Heart right ventricle (tissue), 16 donors: ENCODE measurements at regions of chr21 and their contacts with region 1.

Region 1: GRCh38 chr21:43001295-43001694 is 26.9 kb downstream of the PKNOX1 start:
- DNase-seq: no peak
- ATAC-seq: peak in 1 of 8 donors; percentile 49
- H3K4me3 ChIP-seq: no peak overlapping the region
- H3K27ac ChIP-seq: no peak overlapping the region
- H3K4me1 ChIP-seq: peaks cover 0 to 15% (median 5%) of the 10 kb centered on the region in 9 donors
- H3K27me3 ChIP-seq: no peaks in the 10 kb centered on the region
- CTCF ChIP-seq: no peak

Region 2: GRCh38 chr21:42486531-42486930 is 514.8 kb before region 1 on chr21:
- intact Hi-C with region 1: no loop called
- DNase-seq: no peak
- ATAC-seq: no peak
- H3K4me3 ChIP-seq: no peak overlapping the region
- H3K27ac ChIP-seq: no peak overlapping the region
- H3K4me1 ChIP-seq: no peaks in the 10 kb centered on the region
- H3K27me3 ChIP-seq: peaks cover 0 to 19% (median 6%) of the 10 kb centered on the region in 7 donors
- CTCF ChIP-seq: no peak

Region 3: DNA sequence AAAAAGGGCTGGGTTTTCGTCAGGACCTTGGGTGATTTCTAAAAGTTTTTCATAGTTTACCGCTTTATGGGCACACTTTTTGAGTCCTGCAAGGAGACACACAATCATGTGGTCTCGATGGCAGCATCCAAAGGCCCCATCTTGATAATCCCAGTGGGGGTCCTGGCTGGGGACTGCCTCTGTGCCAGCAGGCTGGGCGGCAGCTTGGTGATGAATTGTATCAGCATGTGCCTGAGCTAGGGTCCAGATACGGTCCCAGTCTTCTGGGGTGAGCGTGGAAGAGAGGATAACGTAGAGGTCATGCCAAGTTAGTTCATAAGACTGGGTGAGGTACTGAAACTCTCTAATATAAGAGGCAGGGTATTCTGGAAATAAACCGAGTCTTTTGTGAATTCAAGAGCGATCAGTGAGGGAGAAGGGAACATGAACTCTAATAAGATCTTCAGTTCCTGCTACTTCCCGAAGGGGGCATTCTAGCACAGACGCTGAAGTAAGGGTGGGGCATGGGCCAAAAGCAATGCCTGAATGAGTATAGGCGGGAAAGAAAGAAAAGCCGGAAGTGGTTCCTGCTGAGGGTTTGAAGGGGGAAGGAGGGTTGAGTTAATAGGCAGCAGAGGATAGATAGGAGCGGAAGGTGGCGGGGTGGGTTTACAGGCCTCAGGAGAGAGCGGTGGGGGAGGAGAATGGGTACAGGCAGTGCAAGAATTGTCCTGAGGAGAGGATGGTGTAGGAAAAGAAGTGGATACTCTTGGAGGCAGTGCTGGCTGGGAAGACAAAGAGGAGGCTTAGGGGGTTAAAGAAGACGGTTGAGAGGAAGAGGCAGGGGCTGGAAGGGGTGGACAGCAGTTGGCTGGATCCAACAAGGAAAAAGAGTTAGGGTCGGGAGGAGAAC is 77.5 kb before region 1 on chr21:
- intact Hi-C with region 1: loop called in 1 of 10 experiments (anchors 10 kb)
- DNase-seq: peak; percentile 25 to 73
- ATAC-seq: peak; percentile 72 to 93 (median 86)
- H3K4me3 ChIP-seq: peak overlapping the region in 2 of 10 donors; percentile 6 to 7
- H3K27ac ChIP-seq: peak overlapping the region in 1 of 10 donors; percentile 44
- H3K4me1 ChIP-seq: peaks cover 0 to 12% (median 4%) of the 10 kb centered on the region in 9 donors
- H3K27me3 ChIP-seq: no peaks in the 10 kb centered on the region
- CTCF ChIP-seq: peak; percentile 50 to 83 (median 74)

Region 4: GRCh38 chr21:43372663-43373361 is 371.5 kb after region 1 on chr21:
- intact Hi-C with region 1: no loop called
- DNase-seq: peak in 1 of 2 donors; percentile 7
- ATAC-seq: no peak
- H3K4me3 ChIP-seq: no peak overlapping the region
- H3K27ac ChIP-seq: no peak overlapping the region
- H3K4me1 ChIP-seq: peaks cover 0 to 10% (median 0%) of the 10 kb centered on the region in 9 donors
- H3K27me3 ChIP-seq: no peaks in the 10 kb centered on the region
- CTCF ChIP-seq: no peak